Mammary epithelial cell (primary cell): ENCODE measurements at regions of chr7 and their contacts with region 1.

Region 1: GRCh38 chr7:108016841-108017775 is 14.1 kb upstream of the LAMB1 start:
- DNase-seq: peak; percentile 90
- H3K4me3 ChIP-seq: no peak overlapping the region
- H3K27ac ChIP-seq: no peak overlapping the region
- H3K4me1 ChIP-seq: peaks cover 38% of the 10 kb centered on the region
- H3K27me3 ChIP-seq: no peaks in the 10 kb centered on the region
- CTCF ChIP-seq: peak; percentile 68 to 71

Region 2: DNA sequence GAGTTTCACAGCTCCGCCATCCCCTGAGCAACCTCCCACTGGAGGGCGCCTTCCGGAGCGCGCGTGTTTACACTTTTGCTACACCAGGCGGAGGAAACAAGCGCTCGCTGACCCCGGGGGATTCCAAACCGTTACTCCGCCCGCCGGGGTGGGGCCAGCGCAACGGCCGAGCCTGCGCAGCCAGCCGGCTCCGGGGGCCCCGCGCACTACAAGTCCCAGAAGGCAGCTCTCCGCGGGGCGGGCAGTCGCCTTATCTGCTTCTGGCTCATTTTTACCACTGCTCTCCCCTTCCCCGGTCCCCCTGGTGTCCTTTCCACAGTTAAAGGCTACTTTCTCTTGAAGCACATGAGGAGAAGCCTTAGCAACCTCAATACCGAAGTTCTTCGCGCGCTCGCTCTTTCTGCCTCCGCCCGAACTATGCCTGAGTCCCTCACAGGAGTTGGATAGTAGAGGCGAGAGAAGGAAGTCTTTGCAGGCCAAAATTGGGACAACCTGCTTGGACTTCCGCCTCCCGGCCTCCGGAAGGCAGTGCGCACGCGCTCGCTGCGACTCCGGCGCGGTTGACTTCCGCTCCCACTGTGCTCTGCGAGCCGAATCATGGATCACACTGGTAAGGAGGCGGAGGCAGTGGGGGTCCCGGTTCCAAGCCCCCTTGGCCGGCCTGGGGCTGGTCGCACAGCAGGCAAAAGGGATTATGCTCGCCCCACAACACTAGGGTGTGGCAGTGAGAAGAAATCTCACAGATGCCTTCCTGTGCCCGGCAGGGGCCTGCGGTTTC is 273.4 kb before region 1 on chr7 and contains the start of gene CBLL1:
- CTCF ChIA-PET with region 1: no interaction called
- dilution Hi-C with region 1: no loop called
- in situ Hi-C with region 1: no loop called
- intact Hi-C with region 1: loop called (anchors 5 kb)
- DNase-seq: peak; percentile 94
- H3K4me3 ChIP-seq: peak within 1 kb of the TSS; percentile 75 to 99 (median 93)
- H3K27ac ChIP-seq: peak within 1 kb of the TSS; percentile 75
- H3K4me1 ChIP-seq: peaks cover 20% of the 10 kb centered on the region
- H3K27me3 ChIP-seq: no peaks in the 10 kb centered on the region
- CTCF ChIP-seq: peak; percentile 37 to 76
- total RNA-seq, gene CBLL1: 26.9 to 37.8 TPM

Region 3: GRCh38 chr7:107948645-107949497 is 68.2 kb before region 1 on chr7:
- CTCF ChIA-PET with region 1: no interaction called
- dilution Hi-C with region 1: no loop called
- in situ Hi-C with region 1: no loop called
- intact Hi-C with region 1: loop called (anchors 5 kb)
- DNase-seq: peak; percentile 88
- H3K4me3 ChIP-seq: no peak overlapping the region
- H3K27ac ChIP-seq: peak overlapping the region; percentile 36
- H3K4me1 ChIP-seq: peaks cover 80% of the 10 kb centered on the region
- H3K27me3 ChIP-seq: no peaks in the 10 kb centered on the region
- CTCF ChIP-seq: no peak

Region 4: DNA sequence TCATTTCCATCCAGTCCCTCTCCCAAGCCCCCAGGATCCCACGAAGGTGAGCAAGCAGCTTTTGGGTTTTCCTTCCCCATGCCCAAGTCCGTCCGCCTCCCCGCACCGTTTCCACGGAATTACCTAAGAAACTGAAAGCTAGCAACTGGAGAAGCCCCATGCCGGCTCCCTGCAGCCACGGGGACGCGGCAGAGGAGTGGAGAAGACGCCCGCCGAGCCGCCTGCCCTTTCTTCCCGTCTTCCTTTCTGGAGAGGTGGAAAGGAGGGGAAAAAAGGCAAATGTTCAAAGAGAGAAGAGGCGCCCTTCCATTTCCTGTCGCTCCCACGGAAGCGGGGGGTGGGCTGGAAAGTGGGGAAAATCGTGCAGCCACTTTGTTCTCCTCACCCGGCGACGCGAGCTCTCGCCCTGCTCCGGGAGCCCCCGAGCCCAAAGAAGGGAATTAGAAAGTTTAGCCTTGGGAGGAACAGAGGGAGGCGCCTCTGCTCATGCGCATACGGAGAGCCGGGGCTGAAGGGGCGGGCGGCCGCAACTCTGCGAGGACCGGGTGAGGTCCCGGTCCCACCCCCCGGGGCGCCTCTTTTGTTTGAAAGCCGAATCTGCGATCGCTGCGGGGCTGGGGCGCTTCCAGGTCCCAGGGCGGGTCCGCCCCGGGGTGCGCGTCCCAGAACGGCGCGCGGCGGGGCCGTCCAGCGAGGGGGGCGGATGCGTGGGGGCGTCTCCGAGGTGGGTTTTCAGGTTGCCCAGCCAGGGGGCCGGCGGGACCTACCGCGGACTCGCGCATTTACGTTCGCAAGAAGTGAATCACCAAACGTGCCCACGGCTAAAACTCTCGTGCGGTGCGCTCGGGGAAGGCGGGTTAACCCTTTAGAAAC is 14.1 kb before region 1 on chr7 and contains the start of gene LAMB1:
- CTCF ChIA-PET with region 1: no interaction called
- dilution Hi-C with region 1: no loop called
- in situ Hi-C with region 1: no loop called
- intact Hi-C with region 1: loop called (anchors 2 kb)
- DNase-seq: peak; percentile 64
- H3K4me3 ChIP-seq: peak within 1 kb of the TSS; percentile 71 to 81 (median 80)
- H3K27ac ChIP-seq: peak within 1 kb of the TSS; percentile 55
- H3K4me1 ChIP-seq: peaks cover 41% of the 10 kb centered on the region
- H3K27me3 ChIP-seq: no peaks in the 10 kb centered on the region
- CTCF ChIP-seq: no peak
- total RNA-seq, gene LAMB1: 219 to 285 TPM

Region 5: GRCh38 chr7:108030516-108030915 is 13.4 kb after region 1 on chr7:
- CTCF ChIA-PET with region 1: no interaction called
- dilution Hi-C with region 1: no loop called
- in situ Hi-C with region 1: no loop called
- intact Hi-C with region 1: no loop called
- DNase-seq: peak; percentile 16
- H3K4me3 ChIP-seq: no peak overlapping the region
- H3K27ac ChIP-seq: no peak overlapping the region
- H3K4me1 ChIP-seq: peaks cover 12% of the 10 kb centered on the region
- H3K27me3 ChIP-seq: no peaks in the 10 kb centered on the region
- CTCF ChIP-seq: no peak

Region 6: DNA sequence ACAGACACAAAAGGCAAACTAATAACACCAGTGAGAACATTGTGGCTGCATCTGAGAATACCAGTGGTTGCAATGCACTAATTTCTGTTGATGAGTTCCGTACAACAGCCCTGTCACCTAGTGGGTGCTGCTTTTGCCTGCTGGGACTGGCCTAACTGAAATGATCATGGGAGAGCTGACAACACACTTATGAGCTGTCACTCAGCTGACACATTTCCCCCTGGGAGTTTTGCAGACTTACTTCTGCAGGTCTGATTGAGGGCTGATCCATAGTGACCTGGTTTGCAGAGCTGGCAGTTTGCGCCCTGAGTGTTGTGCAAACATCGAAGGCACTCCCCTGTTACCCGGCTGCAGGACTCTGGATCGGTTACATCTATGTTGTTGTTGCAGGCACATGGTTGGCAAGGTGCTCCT is 46.4 kb after region 1 on chr7:
- CTCF ChIA-PET with region 1: no interaction called
- dilution Hi-C with region 1: no loop called
- in situ Hi-C with region 1: no loop called
- intact Hi-C with region 1: loop called (anchors 1 kb)
- DNase-seq: peak; percentile 73
- H3K4me3 ChIP-seq: no peak overlapping the region
- H3K27ac ChIP-seq: no peak overlapping the region
- H3K4me1 ChIP-seq: no peaks in the 10 kb centered on the region
- H3K27me3 ChIP-seq: no peaks in the 10 kb centered on the region
- CTCF ChIP-seq: peak in 1 of 2 donors; percentile 10

Region 7: GRCh38 chr7:108094933-108095710 is 78.0 kb after region 1 on chr7:
- CTCF ChIA-PET with region 1: no interaction called
- dilution Hi-C with region 1: no loop called
- in situ Hi-C with region 1: no loop called
- intact Hi-C with region 1: loop called (anchors 5 kb)
- DNase-seq: peak; percentile 93
- H3K4me3 ChIP-seq: no peak overlapping the region
- H3K27ac ChIP-seq: no peak overlapping the region
- H3K4me1 ChIP-seq: peaks cover 17% of the 10 kb centered on the region
- H3K27me3 ChIP-seq: no peaks in the 10 kb centered on the region
- CTCF ChIP-seq: no peak

Region 8: DNA sequence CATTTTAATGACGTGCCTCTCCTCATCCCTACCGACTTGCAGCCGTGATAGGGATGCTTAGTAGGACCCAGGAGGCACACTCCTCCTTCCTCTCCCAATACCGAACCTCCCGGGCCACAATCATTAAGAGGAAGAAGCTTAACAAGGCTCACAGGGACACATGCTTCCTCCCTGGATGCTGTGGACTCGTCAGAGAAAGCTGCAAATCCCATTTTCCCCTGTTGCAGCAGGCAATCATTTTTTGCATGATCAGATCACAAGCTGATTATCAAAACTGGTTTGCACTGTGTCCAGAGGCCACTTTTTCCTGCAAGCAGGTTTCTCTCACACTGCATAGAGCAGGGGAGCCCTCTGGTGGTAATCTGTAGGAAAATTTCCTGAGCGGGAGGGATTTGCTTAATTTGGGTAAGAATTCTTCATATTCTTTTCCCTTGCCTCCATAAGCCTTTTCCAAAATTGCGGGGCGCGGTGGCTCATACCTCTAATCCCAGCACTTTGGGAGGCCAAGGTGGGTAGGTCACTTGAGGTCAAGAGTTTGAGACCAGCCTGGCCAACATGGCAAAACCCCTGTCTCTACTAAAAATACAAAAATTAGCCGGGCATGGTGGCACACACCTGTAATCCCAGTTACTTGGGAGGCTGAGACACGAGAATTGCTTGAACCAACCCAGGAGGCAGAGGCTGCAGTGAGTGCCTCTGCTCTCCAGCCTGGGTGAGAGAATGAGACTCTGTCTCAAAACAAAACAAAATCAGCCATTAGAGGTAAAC is 129.1 kb after region 1 on chr7:
- CTCF ChIA-PET with region 1: no interaction called
- dilution Hi-C with region 1: no loop called
- in situ Hi-C with region 1: no loop called
- intact Hi-C with region 1: loop called (anchors 5 kb)
- DNase-seq: peak; percentile 54
- H3K4me3 ChIP-seq: no peak overlapping the region
- H3K27ac ChIP-seq: no peak overlapping the region
- H3K4me1 ChIP-seq: no peaks in the 10 kb centered on the region
- H3K27me3 ChIP-seq: no peaks in the 10 kb centered on the region
- CTCF ChIP-seq: peak; percentile 86 to 92

Region 9: GRCh38 chr7:108294595-108294994 is 277.5 kb after region 1 on chr7:
- CTCF ChIA-PET with region 1: no interaction called
- dilution Hi-C with region 1: no loop called
- in situ Hi-C with region 1: no loop called
- intact Hi-C with region 1: no loop called
- DNase-seq: no peak
- H3K4me3 ChIP-seq: no peak overlapping the region
- H3K27ac ChIP-seq: no peak overlapping the region
- H3K4me1 ChIP-seq: peaks cover 7% of the 10 kb centered on the region
- H3K27me3 ChIP-seq: no peaks in the 10 kb centered on the region
- CTCF ChIP-seq: no peak